ENCODE measurements at regions of chr1 and their contacts with region 1.

Region 1: GRCh38 chr1:194802572-194803160 is 1616.3 kb upstream of the B3GALT2 start:
- DNase-seq: no peak
- ATAC-seq: no peak
- H3K4me3 Mint-ChIP-seq: no peak overlapping the region
- H3K27ac Mint-ChIP-seq: no peak overlapping the region
- H3K4me1 Mint-ChIP-seq: no peaks in the 10 kb centered on the region
- H3K27me3 Mint-ChIP-seq: no peaks in the 10 kb centered on the region

Region 2: GRCh38 chr1:194705123-194705854 is 97.4 kb before region 1 on chr1:
- CTCF ChIA-PET with region 1: no interaction called
- POLR2A ChIA-PET with region 1: no interaction called
- intact Hi-C with region 1: no loop called
- DNase-seq: no peak
- ATAC-seq: peak; percentile 16
- H3K4me3 Mint-ChIP-seq: no peak overlapping the region
- H3K27ac Mint-ChIP-seq: no peak overlapping the region
- H3K4me1 Mint-ChIP-seq: no peaks in the 10 kb centered on the region
- H3K27me3 Mint-ChIP-seq: no peaks in the 10 kb centered on the region

Region 3: DNA sequence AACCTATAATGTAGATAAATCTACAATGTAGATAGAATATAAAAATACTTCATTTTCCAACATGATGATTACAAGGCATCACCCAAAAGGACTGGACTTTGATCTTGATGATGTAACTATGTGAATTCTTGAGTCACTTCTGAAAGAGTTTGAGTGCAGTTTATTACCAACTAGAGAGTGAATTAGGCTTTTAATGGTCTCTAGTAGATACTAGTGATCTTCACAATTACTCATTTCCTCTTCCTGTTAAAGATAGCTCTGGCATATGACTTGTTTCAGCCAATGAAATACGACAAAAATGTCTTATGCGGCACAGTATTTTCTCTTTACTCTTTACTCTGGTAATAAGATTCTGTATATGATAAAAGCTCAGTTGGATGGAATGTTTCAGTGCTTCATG is 28.1 kb before region 1 on chr1:
- CTCF ChIA-PET with region 1: no interaction called
- POLR2A ChIA-PET with region 1: no interaction called
- intact Hi-C with region 1: loop called in 1 of 2 experiments (anchors 2 kb)
- DNase-seq: no peak
- ATAC-seq: no peak
- H3K4me3 Mint-ChIP-seq: no peak overlapping the region
- H3K27ac Mint-ChIP-seq: no peak overlapping the region
- H3K4me1 Mint-ChIP-seq: no peaks in the 10 kb centered on the region
- H3K27me3 Mint-ChIP-seq: no peaks in the 10 kb centered on the region